ENCODE measurements at regions of chr3 and their contacts with region 1.

Region 1: DNA sequence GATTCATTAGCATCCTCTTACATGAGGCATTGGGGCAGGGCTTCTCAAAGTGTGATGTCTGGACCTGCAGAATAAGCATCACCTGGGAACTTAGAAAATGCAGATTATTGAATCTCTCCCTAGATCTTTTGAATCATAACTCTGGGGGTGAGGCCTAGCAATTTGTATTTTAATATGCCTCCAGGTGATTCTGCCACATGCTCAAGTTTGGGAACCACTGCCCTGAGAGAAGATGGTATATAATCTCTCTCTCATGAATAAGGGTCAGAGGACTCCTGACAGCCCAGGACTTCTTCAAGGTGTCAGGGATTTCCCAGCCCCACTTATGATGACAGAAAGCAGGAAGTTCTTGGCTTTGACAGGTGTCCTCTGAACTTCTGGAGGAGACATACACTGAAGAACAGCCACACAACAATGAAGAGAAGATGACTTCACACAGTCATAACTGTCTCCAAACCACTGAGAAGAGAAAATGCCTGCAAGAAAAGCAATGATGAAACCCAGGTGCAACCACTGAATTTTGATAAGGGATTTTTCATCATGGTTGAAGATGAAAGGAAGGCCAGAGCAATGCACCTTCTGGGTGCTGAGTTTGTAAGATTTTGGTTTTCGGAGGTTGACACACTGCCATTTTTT is 211.9 kb upstream of the MRPL3 start:
- DNase-seq: no peak
- H3K4me3 ChIP-seq: no peak overlapping the region
- H3K27ac ChIP-seq: no peak overlapping the region
- H3K4me1 ChIP-seq: no peaks in the 10 kb centered on the region
- H3K27me3 ChIP-seq: no peaks in the 10 kb centered on the region
- CTCF ChIP-seq: no peak
- POLR2A ChIP-seq: no peak

Region 2: GRCh38 chr3:131738095-131738494 is 23.4 kb after region 1 on chr3:
- intact Hi-C with region 1: loop called (anchors 1 kb)
- DNase-seq: no peak
- H3K4me3 ChIP-seq: no peak overlapping the region
- H3K27ac ChIP-seq: no peak overlapping the region
- H3K4me1 ChIP-seq: no peaks in the 10 kb centered on the region
- H3K27me3 ChIP-seq: no peaks in the 10 kb centered on the region
- CTCF ChIP-seq: no peak
- POLR2A ChIP-seq: no peak

Region 3: DNA sequence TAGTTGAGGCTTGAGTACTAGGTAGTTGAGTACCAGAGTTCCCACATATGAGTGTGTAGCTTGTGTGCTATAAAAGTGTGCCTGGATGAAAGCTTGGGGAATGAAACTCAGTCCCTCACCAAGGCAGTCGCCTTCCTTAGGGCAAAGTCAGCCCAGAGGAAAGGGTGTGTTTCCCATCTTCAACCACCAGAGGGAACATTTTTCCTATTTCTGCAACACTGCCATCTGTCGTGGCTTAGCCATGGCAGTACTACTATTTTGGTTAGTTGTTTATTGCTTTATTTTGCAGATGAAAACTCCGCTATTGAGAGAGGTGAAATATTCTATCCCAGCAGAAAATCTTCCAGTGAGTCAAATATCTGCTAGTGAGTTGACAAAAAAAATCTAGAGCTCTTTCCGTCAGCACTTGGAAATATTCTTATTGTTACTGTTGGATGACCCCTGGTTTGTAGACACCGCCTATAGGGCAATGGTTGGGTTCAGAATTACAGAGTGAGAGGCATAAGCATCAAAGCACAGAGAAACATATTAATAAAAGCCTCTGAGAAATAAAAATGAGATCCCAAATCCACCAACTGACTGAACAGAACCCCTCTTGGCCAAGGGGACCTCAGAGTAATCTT is 80.2 kb after region 1 on chr3:
- intact Hi-C with region 1: no loop called
- DNase-seq: no peak
- H3K4me3 ChIP-seq: no peak overlapping the region
- H3K27ac ChIP-seq: no peak overlapping the region
- H3K4me1 ChIP-seq: no peaks in the 10 kb centered on the region
- H3K27me3 ChIP-seq: no peaks in the 10 kb centered on the region
- CTCF ChIP-seq: peak in 2 of 3 donors; percentile 35 to 48
- POLR2A ChIP-seq: no peak

Measured in breast epithelium (tissue), 4 donors.